ENCODE measurements at regions of chr5 and their contacts with region 1.

Region 1: GRCh38 chr5:132820162-132820754 is 7.2 kb downstream of the SOWAHA start:
- DNase-seq: peak; percentile 82
- H3K4me3 Mint-ChIP-seq: no peak overlapping the region
- H3K27ac Mint-ChIP-seq: no peak overlapping the region
- H3K4me1 Mint-ChIP-seq: peaks cover 29% of the 10 kb centered on the region
- H3K27me3 Mint-ChIP-seq: peaks cover 45% of the 10 kb centered on the region

Region 2: DNA sequence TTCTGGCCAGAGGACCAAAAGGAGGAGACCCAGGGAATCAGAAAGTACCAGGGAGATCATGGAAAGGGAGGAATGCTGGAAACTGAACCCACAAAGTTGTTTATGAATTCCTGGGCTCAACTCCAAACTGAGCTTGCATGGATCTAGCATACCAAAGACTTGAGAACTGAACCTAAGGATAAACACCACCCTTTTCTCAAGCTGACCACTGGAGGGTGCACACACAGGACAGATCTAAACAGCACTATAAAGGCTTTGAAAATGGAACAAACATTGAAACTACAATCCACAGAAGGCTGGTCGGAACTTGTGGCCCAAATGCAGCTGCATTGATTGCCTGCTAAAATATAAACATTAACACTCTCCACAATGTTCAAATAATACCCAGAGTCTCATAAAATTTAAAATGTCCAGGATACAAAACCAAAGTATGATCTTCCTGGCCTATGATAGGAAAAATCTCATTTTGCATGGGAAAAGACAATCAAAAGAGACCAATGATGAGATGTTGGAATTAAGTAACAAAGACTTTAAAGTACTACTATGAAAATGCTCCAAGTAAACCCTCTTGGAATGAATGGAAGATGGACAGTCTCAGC is 314.1 kb before region 1 on chr5:
- intact Hi-C with region 1: loop called (anchors 1 kb)
- DNase-seq: no peak
- H3K4me3 Mint-ChIP-seq: no peak overlapping the region
- H3K27ac Mint-ChIP-seq: no peak overlapping the region
- H3K4me1 Mint-ChIP-seq: peaks cover 54% of the 10 kb centered on the region
- H3K27me3 Mint-ChIP-seq: peaks cover 4% of the 10 kb centered on the region

Region 3: DNA sequence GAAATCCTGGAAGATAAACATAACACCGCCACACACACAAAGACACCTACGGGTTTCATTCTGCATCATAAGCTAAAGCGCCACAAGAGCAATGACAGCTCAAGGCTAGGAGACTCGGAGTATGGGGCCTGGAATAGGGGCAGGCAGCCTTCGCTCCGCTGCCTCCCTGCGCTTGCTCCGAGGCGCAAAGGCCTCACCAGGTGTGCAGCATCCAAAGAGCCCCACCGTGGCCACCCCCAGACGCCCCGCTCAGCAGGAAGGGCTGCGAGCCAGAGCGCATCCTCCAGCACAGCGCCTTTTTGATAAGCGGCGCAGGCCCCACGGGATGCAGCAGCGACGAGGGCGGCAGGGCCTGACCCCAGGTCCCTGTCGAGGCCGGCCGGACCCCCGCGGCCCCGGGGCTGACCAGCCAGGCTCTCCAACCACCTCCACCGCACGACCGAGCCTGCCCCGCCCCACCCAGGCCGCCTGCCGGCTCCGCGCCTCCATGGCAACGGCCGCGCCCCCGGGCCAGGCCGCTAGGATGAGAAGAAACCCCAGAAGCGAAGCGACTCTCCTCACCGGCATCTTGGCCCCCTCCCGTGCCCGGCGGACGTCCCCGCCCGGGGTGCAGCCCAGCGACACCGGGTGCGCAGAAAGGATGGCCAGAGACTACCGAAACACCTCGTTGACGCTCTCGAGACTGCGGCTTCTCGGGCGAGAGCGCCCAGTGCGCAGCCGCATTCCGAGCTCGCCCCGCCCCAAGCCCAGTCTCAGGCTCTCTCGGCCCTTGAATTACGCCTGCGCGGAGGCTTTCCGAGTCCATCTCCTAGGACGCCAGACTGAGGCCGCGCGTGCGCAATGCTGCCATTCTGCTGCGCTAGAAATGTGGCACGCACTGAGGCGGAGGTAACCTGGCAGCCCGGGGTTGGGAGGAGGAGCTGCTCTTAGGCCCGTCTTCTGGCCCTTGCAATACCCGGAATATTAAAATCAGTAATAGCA is 83.1 kb before region 1 on chr5 and contains the start of gene KIF3A:
- intact Hi-C with region 1: loop called (anchors 2 kb)
- DNase-seq: peak; percentile 98
- H3K4me3 Mint-ChIP-seq: peak within 1 kb of the TSS; percentile 87
- H3K27ac Mint-ChIP-seq: peak within 1 kb of the TSS; percentile 93
- H3K4me1 Mint-ChIP-seq: peaks cover 55% of the 10 kb centered on the region
- H3K27me3 Mint-ChIP-seq: peaks cover 10% of the 10 kb centered on the region
- total RNA-seq, gene KIF3A: 58.5 and 66.9 TPM in 2 replicates

Region 4: GRCh38 chr5:132753135-132753987 is 66.9 kb before region 1 on chr5:
- intact Hi-C with region 1: loop called (anchors 2 kb)
- DNase-seq: no peak
- H3K4me3 Mint-ChIP-seq: peak overlapping the region; percentile 35
- H3K27ac Mint-ChIP-seq: peak overlapping the region; percentile 90
- H3K4me1 Mint-ChIP-seq: peaks cover 72% of the 10 kb centered on the region
- H3K27me3 Mint-ChIP-seq: peaks cover 3% of the 10 kb centered on the region

Measured in activated T-helper 1 cell treated with anti-CD3 and anti-CD28 coated beads, Interleukin-12 subunit alpha, Interleukin-12 subunit beta, Interleukin-2, Interleukin-4 antibody, amounts not matched to agents 30 ng/mL and 10 ng/mL and 1 ng/mL, durations not matched to agents 14 hours and 24 hours and 36 hours (primary cell).